Activated CD4-positive, alpha-beta T cell treated with anti-CD3 and anti-CD28 coated beads for 36 hours (primary cell): ENCODE measurements at regions of chr11 and their contacts with region 1.

Region 1: GRCh38 chr11:86592659-86593451 is 79.6 kb downstream of the ME3 start:
- DNase-seq: peak; percentile 96
- ATAC-seq: peak; percentile 96
- H3K4me3 Mint-ChIP-seq: no peak overlapping the region
- H3K27ac Mint-ChIP-seq: peak overlapping the region; percentile 87
- H3K4me1 Mint-ChIP-seq: peaks cover 70% of the 10 kb centered on the region
- H3K27me3 Mint-ChIP-seq: no peaks in the 10 kb centered on the region

Region 2: DNA sequence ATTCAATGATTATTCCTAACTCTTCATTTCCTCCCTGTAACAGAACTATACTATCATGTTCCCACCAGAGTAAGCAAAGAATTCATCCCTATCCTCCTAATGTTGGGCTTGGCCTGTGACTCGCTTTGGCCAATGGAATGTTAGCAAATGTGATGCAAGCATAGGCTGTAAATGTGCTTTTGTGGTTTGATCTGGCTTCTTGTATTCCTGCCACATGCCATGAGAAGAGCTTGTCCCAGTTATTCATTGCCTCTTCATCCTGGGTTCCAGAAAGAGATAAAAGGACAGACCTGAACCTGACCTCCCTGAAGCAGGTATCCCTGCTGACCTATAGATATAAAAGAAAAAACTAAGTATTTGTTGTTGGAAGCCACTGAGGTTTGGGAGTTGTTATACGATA is 832.9 kb before region 1 on chr11:
- CTCF ChIA-PET with region 1: no interaction called
- POLR2A ChIA-PET with region 1: no interaction called
- intact Hi-C with region 1: loop called in 1 of 2 experiments (anchors 10 kb)
- DNase-seq: no peak
- ATAC-seq: no peak
- H3K4me3 Mint-ChIP-seq: no peak overlapping the region
- H3K27ac Mint-ChIP-seq: no peak overlapping the region
- H3K4me1 Mint-ChIP-seq: peaks cover 65% of the 10 kb centered on the region
- H3K27me3 Mint-ChIP-seq: no peaks in the 10 kb centered on the region

Region 3: DNA sequence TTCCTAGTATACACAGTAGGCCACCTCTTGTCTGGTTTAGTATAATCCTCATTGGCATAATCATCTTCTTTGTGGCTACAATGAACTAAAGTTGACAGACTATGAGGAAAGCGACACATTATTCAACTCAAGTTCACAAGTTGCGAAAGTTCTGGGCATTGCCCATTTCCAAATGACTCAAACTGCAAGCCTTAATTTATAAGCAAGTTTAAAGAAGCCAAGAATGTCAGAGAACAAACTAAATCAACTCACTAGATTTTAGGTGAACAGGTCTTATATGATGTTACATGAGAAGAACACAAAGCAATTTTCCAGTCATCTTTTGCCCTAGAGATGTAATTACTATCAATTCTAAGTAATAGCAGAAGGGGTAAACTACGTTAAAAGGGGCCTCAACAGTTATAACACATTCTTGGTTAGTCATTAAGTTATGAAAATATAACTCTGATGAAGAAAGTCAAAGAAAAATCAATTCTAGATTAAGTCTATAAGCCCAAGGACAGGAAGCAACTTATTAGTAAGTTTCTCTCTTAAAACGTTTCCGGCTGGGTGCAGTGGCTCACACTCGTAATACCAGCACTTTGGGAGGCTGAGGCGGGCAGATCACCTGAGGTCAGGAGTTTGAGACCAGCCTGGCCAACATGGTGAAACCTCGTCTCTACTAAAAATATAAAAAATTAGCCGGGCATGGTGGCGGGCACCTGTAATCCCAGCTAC is 545.4 kb before region 1 on chr11:
- CTCF ChIA-PET with region 1: no interaction called
- POLR2A ChIA-PET with region 1: no interaction called
- intact Hi-C with region 1: loop called (anchors 5 to 10 kb)
- DNase-seq: peak; percentile 75
- ATAC-seq: peak; percentile 73
- H3K4me3 Mint-ChIP-seq: peak overlapping the region; percentile 65
- H3K27ac Mint-ChIP-seq: peak overlapping the region; percentile 96
- H3K4me1 Mint-ChIP-seq: peaks cover 96% of the 10 kb centered on the region
- H3K27me3 Mint-ChIP-seq: no peaks in the 10 kb centered on the region

Region 4: GRCh38 chr11:86218125-86219084 is 374.4 kb before region 1 on chr11:
- CTCF ChIA-PET with region 1: no interaction called
- POLR2A ChIA-PET with region 1: no interaction called
- intact Hi-C with region 1: loop called in 1 of 2 experiments (anchors 5 kb)
- DNase-seq: peak; percentile 79
- ATAC-seq: peak; percentile 40
- H3K4me3 Mint-ChIP-seq: peak overlapping the region; percentile 26
- H3K27ac Mint-ChIP-seq: peak overlapping the region; percentile 91
- H3K4me1 Mint-ChIP-seq: peaks cover 78% of the 10 kb centered on the region
- H3K27me3 Mint-ChIP-seq: no peaks in the 10 kb centered on the region

Region 5: DNA sequence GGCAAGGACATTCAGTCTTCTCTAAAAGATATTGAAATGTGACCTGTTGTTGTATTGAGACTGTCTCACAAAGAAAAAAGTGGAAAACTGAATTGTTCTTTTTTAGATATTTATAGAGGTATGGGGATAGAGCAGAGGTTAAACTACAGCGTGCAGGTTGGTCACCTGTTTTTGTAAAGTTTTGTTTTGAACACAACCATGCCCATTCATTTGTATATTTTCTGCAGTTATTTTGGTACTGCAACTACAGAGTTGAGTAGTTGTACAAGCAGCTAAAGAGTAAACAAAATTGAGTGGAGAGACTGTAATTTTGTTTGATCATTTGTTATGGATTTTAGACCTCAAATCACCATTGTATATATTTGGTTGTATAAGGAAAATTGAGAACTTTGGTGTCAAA is 337.0 kb before region 1 on chr11:
- CTCF ChIA-PET with region 1: no interaction called
- POLR2A ChIA-PET with region 1: no interaction called
- intact Hi-C with region 1: no loop called
- DNase-seq: no peak
- ATAC-seq: peak; percentile 54
- H3K4me3 Mint-ChIP-seq: no peak overlapping the region
- H3K27ac Mint-ChIP-seq: peak overlapping the region; percentile 72
- H3K4me1 Mint-ChIP-seq: peaks cover 53% of the 10 kb centered on the region
- H3K27me3 Mint-ChIP-seq: no peaks in the 10 kb centered on the region

Region 6: DNA sequence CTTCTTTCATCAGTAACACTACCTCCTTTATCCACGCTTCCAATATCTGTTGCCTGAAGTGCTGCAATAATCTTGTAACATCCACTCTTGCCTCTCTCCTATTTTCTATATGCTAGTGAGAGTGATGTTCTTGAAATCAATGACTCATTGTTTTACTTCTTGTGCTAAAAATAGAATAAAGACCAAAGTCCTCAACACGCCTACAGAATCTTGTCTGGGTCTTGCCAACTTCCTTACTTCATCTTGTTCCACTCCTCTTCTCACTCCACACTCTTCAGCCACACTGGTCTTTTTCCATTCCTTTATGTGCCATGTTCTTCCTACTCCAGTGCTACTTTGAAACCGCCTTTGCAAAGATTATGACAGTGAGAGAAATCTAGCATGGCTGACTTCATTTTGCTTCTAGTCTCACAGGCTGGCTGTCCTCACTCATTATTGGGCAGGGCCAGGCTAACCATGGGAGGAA is 81.7 kb before region 1 on chr11:
- CTCF ChIA-PET with region 1: no interaction called
- POLR2A ChIA-PET with region 1: no interaction called
- intact Hi-C with region 1: loop called (anchors 1 kb)
- DNase-seq: peak; percentile 14
- ATAC-seq: peak; percentile 82
- H3K4me3 Mint-ChIP-seq: no peak overlapping the region
- H3K27ac Mint-ChIP-seq: no peak overlapping the region
- H3K4me1 Mint-ChIP-seq: no peaks in the 10 kb centered on the region
- H3K27me3 Mint-ChIP-seq: no peaks in the 10 kb centered on the region

Region 7: GRCh38 chr11:86632499-86633269 is 39.8 kb after region 1 on chr11:
- CTCF ChIA-PET with region 1: no interaction called
- POLR2A ChIA-PET with region 1: no interaction called
- intact Hi-C with region 1: no loop called
- DNase-seq: peak; percentile 79
- ATAC-seq: peak; percentile 98
- H3K4me3 Mint-ChIP-seq: no peak overlapping the region
- H3K27ac Mint-ChIP-seq: no peak overlapping the region
- H3K4me1 Mint-ChIP-seq: peaks cover 20% of the 10 kb centered on the region
- H3K27me3 Mint-ChIP-seq: peaks cover 3% of the 10 kb centered on the region

Region 8: GRCh38 chr11:86740709-86741483 is 148.0 kb after region 1 on chr11:
- CTCF ChIA-PET with region 1: no interaction called
- POLR2A ChIA-PET with region 1: interaction called, 5 read pairs
- intact Hi-C with region 1: loop called in 1 of 2 experiments (anchors 1 kb)
- DNase-seq: peak; percentile 60
- ATAC-seq: peak; percentile 52
- H3K4me3 Mint-ChIP-seq: no peak overlapping the region
- H3K27ac Mint-ChIP-seq: peak overlapping the region; percentile 62
- H3K4me1 Mint-ChIP-seq: peaks cover 30% of the 10 kb centered on the region
- H3K27me3 Mint-ChIP-seq: peaks cover 14% of the 10 kb centered on the region